Heart left ventricle (tissue), 16 donors: ENCODE measurements at regions of chr1 and their contacts with region 1.

Region 1: DNA sequence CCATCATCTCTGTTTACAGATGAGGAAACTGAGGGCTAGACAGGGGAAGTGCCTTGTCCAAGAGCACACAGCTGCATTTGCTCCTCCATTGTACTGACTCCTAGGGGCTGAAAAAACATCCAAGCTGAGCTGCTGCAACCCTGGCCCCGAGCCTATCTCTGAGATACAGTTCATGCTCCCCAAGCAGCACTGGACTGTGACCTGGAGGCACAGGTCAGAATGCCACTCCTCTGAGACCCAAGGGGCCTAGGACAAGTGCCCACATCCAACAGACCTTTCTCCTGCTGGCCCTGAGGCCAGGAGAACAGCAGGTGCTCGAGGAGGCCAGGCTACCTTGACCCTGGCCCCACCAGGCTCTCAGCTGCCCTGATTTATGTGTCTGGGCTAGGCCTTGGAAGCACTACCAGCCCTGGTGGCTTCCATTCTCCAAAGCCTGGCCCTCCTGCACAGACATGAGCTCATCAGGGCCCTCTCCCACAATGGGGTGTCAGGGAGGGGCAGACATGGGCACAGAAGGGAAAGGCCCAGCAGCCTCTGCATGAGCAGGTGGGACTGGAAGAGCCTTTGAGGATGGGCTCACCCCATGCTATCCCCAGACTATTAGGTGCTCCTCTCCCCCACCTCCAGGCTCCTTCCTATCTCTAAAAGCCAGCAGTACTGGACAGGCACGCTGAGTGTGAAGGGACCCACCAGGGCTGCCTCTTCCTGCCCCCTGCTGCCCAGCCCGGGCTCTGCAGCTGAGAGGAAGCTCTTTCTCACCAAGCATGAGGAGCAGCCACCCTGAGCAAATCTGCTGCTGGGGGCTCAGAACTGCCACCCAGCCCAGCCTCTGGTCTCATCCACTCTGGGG is 18.8 kb downstream of the ADGRB2 start:
- DNase-seq: peak; percentile 50 to 80 (median 69)
- ATAC-seq: peak in 3 of 4 donors; percentile 66 to 81 (median 75)
- H3K4me3 ChIP-seq: no peak overlapping the region
- H3K27ac ChIP-seq: no peak overlapping the region
- H3K4me1 ChIP-seq: peaks cover 0 to 39% (median 8%) of the 10 kb centered on the region in 12 donors
- H3K27me3 ChIP-seq: no peaks in the 10 kb centered on the region
- CTCF ChIP-seq: peak; percentile 59 to 84 (median 69)
- POLR2A ChIP-seq: no peak

Region 2: DNA sequence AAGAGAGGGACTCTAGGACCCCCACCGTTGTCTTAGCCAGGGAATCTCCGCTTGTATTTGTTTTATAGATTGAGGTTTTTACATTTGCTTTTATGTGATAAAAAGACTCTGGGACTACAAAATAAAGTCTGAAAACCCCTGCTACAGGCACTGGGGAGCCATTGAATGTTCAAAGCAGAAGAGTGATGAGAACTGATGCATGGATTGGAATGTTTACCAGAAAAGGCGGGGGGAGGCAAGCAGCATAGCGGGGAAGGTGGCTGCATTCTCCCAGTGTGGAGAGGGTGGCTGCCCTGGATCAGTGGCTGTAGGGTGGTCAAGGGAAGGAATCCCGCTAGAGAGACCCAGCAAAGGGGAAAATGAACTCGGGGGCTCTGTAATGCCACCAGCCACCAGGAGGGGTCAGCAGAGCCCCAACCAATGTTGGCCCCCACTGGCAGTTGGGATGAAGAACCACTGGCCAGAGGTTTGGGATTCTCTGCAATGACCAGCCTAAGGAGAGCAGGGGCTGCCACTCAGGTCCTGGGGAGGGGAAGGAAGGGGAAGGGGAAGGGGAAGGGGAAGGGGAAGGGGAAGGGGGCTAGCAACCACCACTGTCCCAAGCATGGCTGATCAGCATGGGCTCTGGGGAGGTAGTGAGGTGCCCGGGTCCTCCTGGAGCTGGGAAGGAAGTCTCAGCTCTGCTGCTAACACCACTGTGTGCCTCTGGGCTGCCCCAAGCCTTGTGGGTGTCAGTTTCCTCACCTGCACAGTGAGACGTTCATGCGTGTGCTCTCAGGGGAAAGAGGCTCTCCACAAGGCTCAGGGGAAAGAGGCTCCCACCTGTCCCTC is 81.5 kb before region 1 on chr1:
- intact Hi-C with region 1: loop called in 6 of 10 experiments (anchors 1 to 10 kb)
- DNase-seq: peak; percentile 50 to 76 (median 58)
- ATAC-seq: peak; percentile 23 to 55 (median 42)
- H3K4me3 ChIP-seq: no peak overlapping the region
- H3K27ac ChIP-seq: no peak overlapping the region
- H3K4me1 ChIP-seq: peaks cover 0 to 25% (median 10%) of the 10 kb centered on the region in 12 donors
- H3K27me3 ChIP-seq: no peaks in the 10 kb centered on the region
- CTCF ChIP-seq: peak; percentile 85 to 96 (median 88)
- POLR2A ChIP-seq: no peak

Region 3: DNA sequence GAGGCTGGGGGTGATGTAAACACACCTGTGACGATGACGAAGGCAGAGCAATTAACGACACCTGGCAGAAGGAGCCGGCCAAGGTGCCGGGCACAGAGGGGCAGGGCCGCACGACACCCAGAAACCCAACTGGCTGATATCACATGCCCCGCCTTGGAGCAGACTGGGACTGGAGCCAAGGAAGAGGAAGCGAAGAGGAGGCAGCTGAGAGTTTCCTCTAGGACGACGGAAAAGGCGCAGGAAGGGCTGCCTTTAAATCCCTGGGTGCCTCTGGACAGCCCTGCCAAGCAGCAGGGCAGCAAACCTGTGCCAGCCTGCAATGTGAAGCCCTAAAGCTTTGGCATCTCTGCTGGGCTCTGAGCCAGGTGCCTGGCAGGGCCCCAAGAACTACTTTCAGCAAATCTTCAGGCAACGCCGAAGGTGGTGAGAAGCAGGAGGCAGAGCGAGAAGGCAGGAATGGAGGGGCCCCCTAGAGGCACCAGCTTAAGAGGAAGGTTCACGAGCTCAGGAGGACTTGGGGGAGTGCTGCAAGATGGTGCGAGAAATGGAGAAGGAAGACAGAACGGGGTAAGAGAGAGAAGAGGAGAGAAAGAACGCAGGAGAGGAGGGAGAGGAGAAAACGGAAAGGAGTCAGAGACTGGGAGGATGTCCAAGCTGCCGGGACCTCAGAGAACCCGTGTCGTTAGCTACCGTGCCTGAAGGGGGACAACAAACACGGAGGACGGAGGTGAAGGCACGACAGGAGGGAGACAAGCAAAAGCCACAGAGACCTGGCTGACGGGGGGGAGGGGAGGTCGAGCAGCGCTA is 75.3 kb before region 1 on chr1:
- intact Hi-C with region 1: loop called in 4 of 10 experiments (anchors 2 to 10 kb)
- DNase-seq: peak; percentile 74 to 86 (median 83)
- ATAC-seq: peak; percentile 58 to 78 (median 66)
- H3K4me3 ChIP-seq: peak overlapping the region in 10 of 12 donors; percentile 12 to 56 (median 44)
- H3K27ac ChIP-seq: peak overlapping the region; percentile 17 to 90 (median 72)
- H3K4me1 ChIP-seq: peaks cover 0 to 85% (median 55%) of the 10 kb centered on the region in 12 donors
- H3K27me3 ChIP-seq: peaks cover 0 to 4% (median 0%) of the 10 kb centered on the region in 9 donors
- CTCF ChIP-seq: peak in 7 of 12 donors; percentile 1 to 25 (median 17)
- POLR2A ChIP-seq: no peak

Region 4: DNA sequence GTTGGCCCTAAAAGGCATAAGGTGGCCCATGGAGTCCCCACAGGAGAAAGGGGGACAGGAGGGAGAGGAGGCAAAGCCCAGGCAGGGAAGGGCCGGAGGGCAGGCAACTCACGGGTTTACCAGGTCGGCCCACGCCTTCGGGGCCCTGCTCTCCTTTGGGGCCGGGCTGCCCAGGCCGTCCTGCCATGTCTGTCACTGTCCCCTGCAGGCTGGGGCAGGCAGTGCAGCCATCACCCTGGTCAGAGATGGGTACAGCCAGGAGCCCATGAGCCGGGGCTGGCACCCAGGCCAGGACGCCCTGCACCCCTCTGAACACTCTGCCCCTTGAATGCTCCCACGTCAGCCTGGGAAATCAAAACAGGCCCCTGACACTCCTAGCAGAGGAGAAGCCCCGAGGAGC is 61.3 kb before region 1 on chr1:
- intact Hi-C with region 1: no loop called
- DNase-seq: no peak
- ATAC-seq: peak in 3 of 4 donors; percentile 21 to 59 (median 39)
- H3K4me3 ChIP-seq: no peak overlapping the region
- H3K27ac ChIP-seq: no peak overlapping the region
- H3K4me1 ChIP-seq: no peaks in the 10 kb centered on the region
- H3K27me3 ChIP-seq: no peaks in the 10 kb centered on the region
- CTCF ChIP-seq: peak in 10 of 12 donors; percentile 11 to 47 (median 28)
- POLR2A ChIP-seq: no peak

Region 5: DNA sequence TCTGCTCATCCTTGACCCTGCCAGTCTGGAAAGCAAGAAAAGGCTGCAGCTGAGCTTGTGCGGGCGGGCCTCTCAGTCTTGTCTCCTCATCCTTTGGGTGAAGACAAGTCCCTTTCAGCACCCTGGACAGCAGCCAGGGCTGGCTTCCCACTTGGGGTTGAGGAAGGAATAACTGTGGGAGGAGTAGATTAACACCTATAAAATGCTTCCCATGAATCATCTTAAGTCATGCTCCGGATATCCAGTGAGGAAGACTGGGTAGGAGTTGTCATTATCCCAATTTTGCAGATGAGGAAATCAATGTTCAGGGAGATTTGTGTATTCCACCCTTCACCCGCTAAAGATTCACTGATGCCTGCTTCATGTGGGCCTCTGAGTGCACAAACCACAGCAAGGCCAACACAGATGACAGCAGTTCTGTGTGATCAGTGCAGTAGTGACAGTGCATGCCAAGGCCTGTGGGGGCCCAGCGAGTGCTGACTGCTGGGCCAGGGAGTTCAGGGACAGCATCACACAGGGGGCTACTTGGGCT is 21.4 kb before region 1 on chr1:
- intact Hi-C with region 1: no loop called
- DNase-seq: peak; percentile 50 to 80 (median 72)
- ATAC-seq: peak in 2 of 4 donors; percentile 30 to 40
- H3K4me3 ChIP-seq: no peak overlapping the region
- H3K27ac ChIP-seq: no peak overlapping the region
- H3K4me1 ChIP-seq: no peaks in the 10 kb centered on the region
- H3K27me3 ChIP-seq: peaks cover 0 to 3% (median 0%) of the 10 kb centered on the region in 9 donors
- CTCF ChIP-seq: no peak
- POLR2A ChIP-seq: no peak

Region 6: DNA sequence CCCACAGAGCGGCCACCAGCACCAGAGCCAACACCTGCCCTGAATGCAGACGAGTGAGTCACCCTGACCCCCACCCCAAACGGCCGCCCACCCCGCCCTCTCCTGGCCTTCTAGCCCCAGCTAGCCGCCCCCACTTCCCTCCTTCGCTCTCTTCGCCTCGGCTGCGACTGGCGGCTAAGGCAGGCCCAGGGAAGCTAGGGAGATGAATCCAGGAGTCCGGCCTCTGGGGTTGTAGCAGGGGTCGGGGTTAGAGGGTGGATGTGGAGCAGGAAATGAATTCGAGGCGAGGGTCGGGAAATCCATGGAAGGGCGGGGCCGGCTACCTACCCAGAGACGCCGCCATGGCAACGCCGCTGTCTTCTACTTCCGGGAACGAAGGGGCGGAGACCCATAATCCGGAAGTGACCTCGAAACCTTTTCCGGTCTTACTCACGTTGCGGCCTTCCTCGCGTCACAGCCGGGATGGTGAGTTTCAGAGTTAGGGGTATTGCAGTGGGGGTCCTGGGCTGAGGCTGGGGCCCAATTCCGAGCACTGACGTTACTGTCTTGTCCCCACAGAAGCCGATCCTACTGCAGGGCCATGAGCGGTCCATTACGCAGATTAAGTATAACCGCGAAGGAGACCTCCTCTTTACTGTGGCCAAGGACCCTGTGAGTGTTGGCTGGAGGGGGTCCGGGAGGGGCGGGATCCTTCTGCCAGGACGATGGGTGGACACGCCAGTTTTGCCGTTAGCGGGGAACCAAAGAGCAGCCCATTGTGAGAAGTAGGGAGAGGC is 476.8 kb after region 1 on chr1 and contains the starts of genes EIF3I and TMEM234:
- intact Hi-C with region 1: no loop called
- DNase-seq: peak; percentile 94
- ATAC-seq: peak; percentile 94 to 97 (median 96)
- H3K4me3 ChIP-seq: peak within 1 kb of the TSS; percentile 64 to 95 (median 80)
- H3K27ac ChIP-seq: peak within 1 kb of the TSS; percentile 39 to 97 (median 86)
- H3K4me1 ChIP-seq: peaks cover 13 to 29% (median 25%) of the 10 kb centered on the region in 12 donors
- H3K27me3 ChIP-seq: no peaks in the 10 kb centered on the region
- CTCF ChIP-seq: no peak
- POLR2A ChIP-seq: peak; percentile 58 to 77
- total RNA-seq, gene EIF3I: 94.8 to 191 (median 119) TPM
- total RNA-seq, gene TMEM234: 8.8 to 19.8 (median 10.8) TPM